HCT116 (cell line): ENCODE measurements at regions of chr7 and their contacts with region 1.

Region 1: GRCh38 chr7:74026903-74027551 is 946 bp upstream of the ELN start:
- DNase-seq: peak; percentile 31
- ATAC-seq: peak; percentile 83
- H3K4me3 ChIP-seq: peak overlapping the region in 1 of 2 experiments; percentile 23; a peak in 1 of 4 replicates
- H3K27ac ChIP-seq: no peak overlapping the region
- H3K4me1 ChIP-seq: peaks cover 6 to 28% of the 10 kb centered on the region in 2 experiments; a peak in 3 of 4 replicates
- H3K27me3 ChIP-seq: 0 out of 2 replicates have a peak, but pooled peaks cover 7% of the 10 kb centered on the region
- CTCF ChIP-seq: peak; percentile 84 to 98 (median 97)
- POLR2A ChIP-seq: no peak
- RAD21 ChIP-seq: peak; percentile 88

Region 2: DNA sequence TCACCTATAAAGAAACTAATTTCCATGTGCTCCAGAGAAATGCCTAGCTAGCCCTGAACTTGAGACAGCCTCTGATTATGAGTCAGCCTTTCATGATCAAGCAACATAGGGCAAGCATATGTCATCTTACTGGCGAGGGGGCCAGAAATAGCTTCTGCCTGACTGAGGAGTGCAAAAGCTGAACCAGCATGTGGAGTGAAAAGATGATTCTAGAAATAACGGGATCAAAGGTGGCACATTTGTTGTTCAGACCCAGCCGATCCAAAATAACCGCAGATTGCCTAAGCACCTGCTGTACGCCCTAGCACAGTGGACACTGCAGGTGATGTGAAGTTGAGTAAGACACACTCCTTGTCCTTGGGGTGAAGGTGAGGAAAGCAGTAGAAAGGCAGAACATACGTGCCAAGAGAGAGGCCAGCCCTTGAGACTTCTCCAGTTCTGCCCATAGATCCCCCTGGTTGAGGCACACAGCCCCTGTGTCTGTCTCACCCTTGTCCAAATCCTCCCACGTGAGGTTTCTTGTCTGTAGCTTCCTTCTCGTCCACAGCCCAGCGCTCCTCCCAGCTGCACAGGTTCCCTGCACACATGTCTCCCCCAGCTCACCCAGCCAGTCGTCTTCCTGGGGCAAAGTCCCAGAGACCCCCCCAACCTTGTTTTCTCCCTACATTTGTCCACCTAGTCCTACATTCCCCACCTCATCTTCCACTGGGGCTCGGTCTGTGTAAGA is 466.8 kb before region 1 on chr7:
- CTCF ChIA-PET with region 1: no interaction called
- POLR2A ChIA-PET with region 1: no interaction called
- RAD21 ChIA-PET with region 1: no interaction called
- intact Hi-C with region 1: no loop called
- DNase-seq: no peak
- ATAC-seq: no peak
- H3K4me3 ChIP-seq: no peak overlapping the region
- H3K27ac ChIP-seq: 0 out of 2 replicates have a peak overlapping the region, but pooled peaks have one; percentile 20
- H3K4me1 ChIP-seq: peaks cover 22 to 47% of the 10 kb centered on the region in 2 experiments
- H3K27me3 ChIP-seq: no peaks in the 10 kb centered on the region
- CTCF ChIP-seq: no peak
- POLR2A ChIP-seq: no peak
- RAD21 ChIP-seq: no peak

Region 3: DNA sequence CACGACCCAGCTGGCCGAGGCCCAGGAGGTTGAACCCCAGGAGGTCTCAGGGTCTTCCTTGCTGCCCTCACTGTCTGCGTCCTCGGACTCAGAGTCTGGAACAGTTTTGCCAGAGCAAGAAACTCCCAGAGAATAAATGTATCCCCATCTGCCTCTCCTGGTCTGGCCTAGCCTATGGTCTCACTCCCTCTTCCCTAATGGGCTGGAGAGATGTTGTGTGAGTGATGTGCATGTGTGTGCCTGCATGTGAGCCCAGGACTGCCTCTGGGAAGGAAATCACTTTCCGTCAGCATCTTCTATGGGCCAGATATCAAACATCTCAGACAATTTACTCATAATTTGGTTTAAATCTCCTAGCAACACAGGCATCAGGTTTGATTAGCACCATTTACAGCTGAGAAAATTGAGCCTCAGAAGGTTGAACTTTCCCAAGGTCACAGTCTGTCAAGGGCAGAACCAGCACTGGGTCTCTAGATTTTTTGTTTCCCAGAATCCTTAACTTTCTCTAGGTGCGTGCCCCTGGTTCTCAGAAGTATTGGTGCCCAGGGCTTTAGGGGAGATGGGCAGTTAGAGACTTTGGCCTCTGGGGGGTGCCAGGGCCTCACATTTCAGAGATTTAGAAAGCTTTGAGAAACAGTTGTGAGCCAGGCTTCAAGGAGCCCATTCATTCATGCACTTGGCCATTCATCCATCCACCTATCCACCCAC is 161.1 kb before region 1 on chr7:
- CTCF ChIA-PET with region 1: interaction called, 23 read pairs
- POLR2A ChIA-PET with region 1: no interaction called
- RAD21 ChIA-PET with region 1: interaction called in 1 of 2 experiments, 3 read pairs
- intact Hi-C with region 1: loop called (anchors 1 kb)
- DNase-seq: no peak
- ATAC-seq: peak; percentile 88
- H3K4me3 ChIP-seq: no peak overlapping the region
- H3K27ac ChIP-seq: no peak overlapping the region
- H3K4me1 ChIP-seq: no peaks in the 10 kb centered on the region
- H3K27me3 ChIP-seq: no peaks in the 10 kb centered on the region
- CTCF ChIP-seq: peak; percentile 70 to 75 (median 73); a peak in 5 of 6 replicates
- POLR2A ChIP-seq: no peak
- RAD21 ChIP-seq: peak; percentile 91

Region 4: DNA sequence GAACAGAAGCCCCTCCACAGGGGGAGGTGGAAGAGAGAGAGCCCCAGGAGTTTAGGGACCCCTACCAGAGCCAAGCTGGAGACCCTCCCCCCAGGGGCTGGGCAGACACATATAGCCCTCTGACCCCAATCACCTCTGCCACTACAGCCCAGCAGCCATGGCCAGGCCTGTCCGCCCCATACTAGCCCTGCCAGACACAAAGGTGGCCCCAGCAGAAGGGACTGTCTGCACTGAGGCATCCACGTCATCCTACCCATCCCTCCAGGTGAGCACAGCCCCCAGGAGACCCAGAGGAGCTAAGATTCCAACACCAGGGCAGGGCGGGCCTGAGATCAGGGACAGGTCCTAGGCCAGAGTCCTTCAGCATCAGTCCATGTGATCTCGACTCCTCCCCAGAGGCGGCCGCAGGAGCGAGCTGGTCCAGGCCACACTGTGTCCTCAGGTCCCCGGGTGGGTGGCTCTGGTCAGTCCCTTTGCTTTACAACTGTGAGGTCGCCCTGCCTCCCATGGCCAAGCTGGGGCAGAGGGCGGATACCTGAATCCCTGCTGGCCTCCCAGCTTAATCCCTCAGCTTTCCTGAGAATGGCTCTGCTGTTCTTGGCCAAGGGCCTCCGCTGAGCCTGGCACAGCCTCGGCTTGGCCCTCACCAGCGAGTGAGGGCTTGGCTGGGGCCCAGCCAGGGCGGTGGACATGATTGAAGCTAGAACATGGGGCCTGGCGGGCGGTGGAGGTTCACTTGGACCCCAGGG is 13.3 kb before region 1 on chr7:
- CTCF ChIA-PET with region 1: interaction called, 15 read pairs
- POLR2A ChIA-PET with region 1: interaction called, 4 read pairs
- RAD21 ChIA-PET with region 1: no interaction called
- intact Hi-C with region 1: no loop called
- DNase-seq: no peak
- ATAC-seq: no peak
- H3K4me3 ChIP-seq: no peak overlapping the region
- H3K27ac ChIP-seq: no peak overlapping the region
- H3K4me1 ChIP-seq: peaks cover 0 to 8% of the 10 kb centered on the region in 2 experiments; a peak in 2 of 4 replicates
- H3K27me3 ChIP-seq: no peaks in the 10 kb centered on the region
- CTCF ChIP-seq: no peak
- POLR2A ChIP-seq: no peak
- RAD21 ChIP-seq: no peak

Region 5: DNA sequence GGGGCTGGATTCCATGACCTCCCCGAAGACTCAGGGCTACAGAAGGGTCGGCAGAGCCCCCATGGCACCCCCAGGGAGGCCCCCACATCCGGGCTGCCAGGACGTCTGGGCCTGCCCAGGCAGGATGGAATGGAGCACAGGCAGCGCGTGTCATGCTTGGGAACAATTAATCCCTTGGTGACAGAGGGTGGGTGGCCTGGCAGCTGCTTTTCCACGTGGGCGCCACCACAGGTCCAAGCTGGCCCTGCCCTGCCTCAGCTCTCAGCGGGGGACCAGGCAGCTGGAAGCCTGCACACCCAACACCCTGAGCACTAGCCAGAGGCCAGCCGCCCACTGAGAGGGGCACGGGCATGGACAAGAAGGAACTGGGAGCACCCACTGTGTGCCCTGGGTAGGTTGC is 12.3 kb after region 1 on chr7:
- CTCF ChIA-PET with region 1: interaction called, 29 read pairs
- POLR2A ChIA-PET with region 1: no interaction called
- RAD21 ChIA-PET with region 1: no interaction called
- intact Hi-C with region 1: no loop called
- DNase-seq: no peak
- ATAC-seq: no peak
- H3K4me3 ChIP-seq: no peak overlapping the region
- H3K27ac ChIP-seq: peak overlapping the region; percentile 10; the same call in 1 of the 2 replicates
- H3K4me1 ChIP-seq: peaks cover 6 to 7% of the 10 kb centered on the region in 2 experiments
- H3K27me3 ChIP-seq: no peaks in the 10 kb centered on the region
- CTCF ChIP-seq: no peak
- POLR2A ChIP-seq: no peak
- RAD21 ChIP-seq: no peak

Region 6: DNA sequence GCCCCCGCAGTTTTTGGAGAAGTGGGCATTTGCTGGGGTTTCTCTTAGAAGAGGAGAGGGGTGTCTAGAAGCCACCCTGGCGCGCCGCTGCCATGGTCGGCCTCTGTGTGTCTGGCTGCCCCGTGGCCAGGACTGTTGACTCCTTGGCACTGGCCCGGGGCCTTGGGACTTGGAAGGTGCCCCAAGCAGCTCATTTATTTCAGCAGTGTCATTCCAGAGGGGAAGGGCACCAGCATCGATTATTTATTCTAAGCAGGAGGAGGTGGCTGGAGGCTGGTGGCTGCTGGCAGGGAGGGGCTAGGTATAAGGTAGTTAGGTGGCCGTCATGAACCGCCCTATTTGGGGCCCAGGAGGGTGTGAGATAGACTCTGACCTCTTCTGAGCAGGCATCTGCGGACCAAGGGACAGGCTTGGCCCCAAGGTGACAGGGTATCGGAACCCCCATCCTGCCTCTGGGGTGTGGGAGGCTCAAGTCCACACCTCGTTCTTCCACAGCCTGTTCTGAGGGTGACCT is 428.3 kb after region 1 on chr7:
- CTCF ChIA-PET with region 1: no interaction called
- POLR2A ChIA-PET with region 1: no interaction called
- RAD21 ChIA-PET with region 1: no interaction called
- intact Hi-C with region 1: no loop called
- DNase-seq: no peak
- ATAC-seq: no peak
- H3K4me3 ChIP-seq: peak overlapping the region in 1 of 2 experiments; percentile 66; a peak in 1 of 4 replicates
- H3K27ac ChIP-seq: peak overlapping the region; percentile 60; the same call in 1 of the 2 replicates
- H3K4me1 ChIP-seq: peaks cover 23 to 36% of the 10 kb centered on the region in 2 experiments
- H3K27me3 ChIP-seq: no peaks in the 10 kb centered on the region
- CTCF ChIP-seq: no peak
- POLR2A ChIP-seq: no peak
- RAD21 ChIP-seq: no peak